ENCODE measurements at regions of chr5 and their contacts with region 1.

Region 1: DNA sequence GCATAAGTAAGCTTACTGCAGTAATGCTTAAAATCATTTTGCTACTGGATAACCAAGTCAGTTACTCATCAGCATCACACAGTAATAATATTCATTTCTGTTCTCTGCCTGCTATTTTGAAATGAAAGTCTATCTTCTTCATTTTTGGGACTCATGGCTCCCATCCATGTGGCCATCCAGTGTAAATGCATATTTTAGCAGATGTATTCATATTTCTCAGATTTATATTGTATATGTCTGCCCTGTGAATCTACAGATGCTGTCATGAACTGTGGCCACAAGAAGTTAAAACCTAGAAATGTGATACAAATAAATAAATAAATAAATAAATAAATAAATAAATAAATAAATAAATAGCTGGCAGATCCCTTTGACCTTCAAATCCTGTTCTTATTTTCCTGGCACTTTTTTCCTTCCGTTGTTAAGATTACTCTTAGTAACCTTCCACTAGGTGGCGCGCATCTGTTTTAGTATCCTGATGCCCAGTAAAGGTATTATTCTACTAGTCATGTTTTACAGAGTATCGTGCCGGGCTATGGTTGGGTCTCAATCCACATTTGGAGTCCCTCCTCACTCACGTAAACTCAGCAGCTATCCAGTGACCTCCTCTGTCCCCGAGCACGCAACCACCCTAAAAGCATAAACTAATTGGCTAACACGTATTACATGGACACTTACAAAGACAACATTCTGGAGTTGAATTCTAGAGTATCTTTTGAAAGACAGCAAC is 79.2 kb upstream of the IL7R start:
- DNase-seq: peak; percentile 53 to 83 (median 68)
- ATAC-seq: peak; percentile 54 to 60
- H3K4me3 Mint-ChIP-seq: peak overlapping the region; percentile 20 to 84 (median 72)
- H3K27ac Mint-ChIP-seq: peak overlapping the region; percentile 75 to 97 (median 92)
- H3K4me1 Mint-ChIP-seq: peaks cover 34 to 70% (median 61%) of the 10 kb centered on the region in 4 donors
- H3K27me3 Mint-ChIP-seq: no peaks in the 10 kb centered on the region

Region 2: GRCh38 chr5:35735718-35736117 is 41.8 kb before region 1 on chr5:
- POLR2A ChIA-PET with region 1: no interaction called
- DNase-seq: no peak
- ATAC-seq: no peak
- H3K4me3 Mint-ChIP-seq: no peak overlapping the region
- H3K27ac Mint-ChIP-seq: no peak overlapping the region
- H3K4me1 Mint-ChIP-seq: peaks cover 0 to 19% (median 7%) of the 10 kb centered on the region in 4 donors
- H3K27me3 Mint-ChIP-seq: no peaks in the 10 kb centered on the region

Region 3: DNA sequence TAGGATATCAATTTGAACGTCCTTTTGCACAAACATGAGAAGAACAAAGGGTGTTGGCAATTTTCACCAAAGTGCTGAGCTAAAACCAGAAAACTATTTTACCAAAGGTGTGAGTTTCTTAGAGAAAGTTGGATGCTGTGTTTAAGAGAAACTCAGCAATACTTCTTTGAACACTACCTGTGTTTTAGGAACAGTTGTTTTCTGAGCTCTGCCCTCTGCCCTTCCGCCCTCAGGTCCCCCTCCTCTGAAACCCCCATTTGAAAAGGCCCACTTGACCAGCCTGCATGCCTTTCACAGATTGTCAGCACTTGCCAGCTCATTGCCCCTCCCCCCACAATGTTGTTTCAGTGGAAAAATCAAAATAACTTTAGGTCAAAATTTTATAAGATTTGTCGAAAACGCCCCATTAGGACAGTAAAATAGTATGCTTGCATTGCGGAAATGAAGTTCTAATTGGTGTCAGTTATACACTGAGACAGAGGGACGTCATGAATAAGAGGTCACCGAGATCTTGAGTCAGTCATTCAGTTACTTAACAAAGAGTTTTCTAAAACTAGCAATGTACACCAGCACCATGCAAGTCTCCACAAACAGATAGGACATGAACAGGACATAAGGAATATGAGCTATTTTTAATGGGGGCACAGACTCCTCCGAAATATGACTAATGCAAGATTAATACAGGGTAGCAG is 17.3 kb after region 1 on chr5:
- POLR2A ChIA-PET with region 1: interaction called, 18 read pairs
- DNase-seq: no peak
- ATAC-seq: no peak
- H3K4me3 Mint-ChIP-seq: peak overlapping the region in 3 of 10 donors; percentile 9 to 20 (median 11)
- H3K27ac Mint-ChIP-seq: peak overlapping the region in 9 of 10 donors; percentile 18 to 99 (median 77)
- H3K4me1 Mint-ChIP-seq: peaks cover 38 to 75% (median 71%) of the 10 kb centered on the region in 4 donors
- H3K27me3 Mint-ChIP-seq: no peaks in the 10 kb centered on the region

Region 4: DNA sequence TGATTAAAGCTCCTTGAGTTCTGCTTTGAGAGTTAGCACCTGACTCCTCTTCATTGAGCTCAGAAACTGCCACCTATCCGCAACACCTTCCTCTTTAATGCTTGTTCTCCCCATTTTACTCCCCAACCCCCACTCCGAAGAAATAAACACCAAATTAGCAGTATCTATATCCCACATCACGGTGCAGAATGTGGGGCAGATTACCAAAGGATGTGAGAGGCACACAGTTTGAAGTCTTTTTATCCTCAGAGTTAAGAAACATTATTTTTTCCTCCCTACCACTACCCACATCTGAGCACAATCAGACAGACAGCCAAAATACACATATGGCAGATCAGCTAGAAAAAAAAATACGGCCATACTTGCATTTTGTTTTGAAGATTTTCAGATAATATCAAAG is 53.1 kb after region 1 on chr5:
- POLR2A ChIA-PET with region 1: interaction called, 11 read pairs
- DNase-seq: peak in 8 of 10 donors; percentile 52 to 91 (median 70)
- ATAC-seq: peak; percentile 88 to 95
- H3K4me3 Mint-ChIP-seq: peak overlapping the region; percentile 37 to 83 (median 63)
- H3K27ac Mint-ChIP-seq: peak overlapping the region in 9 of 10 donors; percentile 23 to 95 (median 92)
- H3K4me1 Mint-ChIP-seq: peaks cover 41 to 94% (median 89%) of the 10 kb centered on the region in 4 donors
- H3K27me3 Mint-ChIP-seq: no peaks in the 10 kb centered on the region

Region 5: DNA sequence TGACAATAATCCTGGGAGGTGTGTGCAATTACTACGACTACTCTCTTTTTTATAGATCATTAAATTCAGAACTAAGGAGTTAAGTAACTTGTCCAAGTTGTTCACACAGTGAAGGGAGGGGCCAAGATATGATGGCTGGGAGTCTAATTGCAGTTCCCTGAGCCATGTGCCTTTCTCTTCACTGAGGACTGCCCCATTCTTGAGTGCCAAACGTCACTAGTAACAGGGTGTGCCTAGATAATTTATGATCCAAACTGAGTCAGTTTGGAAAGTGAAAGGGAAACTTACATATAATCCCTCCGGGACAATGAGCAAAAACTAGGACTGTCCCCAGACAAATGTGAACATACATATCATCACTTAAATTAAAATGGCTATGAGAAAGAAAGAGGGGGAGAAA is 99.4 kb after region 1 on chr5:
- POLR2A ChIA-PET with region 1: interaction called, 72 read pairs
- DNase-seq: no peak
- ATAC-seq: no peak
- H3K4me3 Mint-ChIP-seq: peak overlapping the region in 8 of 10 donors; percentile 15 to 78 (median 42)
- H3K27ac Mint-ChIP-seq: peak overlapping the region; percentile 82 to 97 (median 86)
- H3K4me1 Mint-ChIP-seq: peaks cover 44 to 92% (median 88%) of the 10 kb centered on the region in 4 donors
- H3K27me3 Mint-ChIP-seq: no peaks in the 10 kb centered on the region

Region 6: DNA sequence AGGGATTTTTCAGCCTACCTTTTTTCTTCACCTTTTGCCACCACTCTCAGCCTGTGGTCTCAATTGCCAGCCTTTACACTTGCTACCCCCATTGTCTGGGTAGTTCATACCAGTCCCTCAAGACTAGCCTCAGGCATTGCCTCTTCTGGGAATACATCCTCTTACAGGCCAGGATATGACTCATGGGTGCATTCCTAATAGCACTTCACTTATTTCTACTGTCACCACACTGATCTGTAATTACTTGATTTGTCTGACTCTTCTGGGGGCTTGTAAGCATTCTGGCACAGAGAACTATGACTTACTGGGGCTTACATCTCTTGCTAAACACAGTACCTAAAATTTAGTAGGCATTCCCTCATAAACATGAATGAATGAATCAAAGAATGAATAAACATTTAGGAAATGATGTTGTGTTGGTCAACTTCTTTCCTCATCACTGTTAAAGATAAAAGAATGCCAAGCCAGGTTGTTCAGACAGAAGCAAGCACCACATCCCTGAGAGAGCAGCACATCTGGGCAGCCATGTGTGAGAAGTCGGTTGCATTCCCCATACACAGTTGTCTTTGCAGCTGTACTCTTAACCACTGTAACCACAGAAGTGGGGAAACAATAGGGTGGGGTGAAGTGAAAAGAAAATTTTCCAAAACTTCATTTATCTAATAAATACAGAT is 106.7 kb after region 1 on chr5:
- POLR2A ChIA-PET with region 1: interaction called, 66 read pairs
- DNase-seq: no peak
- ATAC-seq: peak; percentile 43 to 54
- H3K4me3 Mint-ChIP-seq: peak overlapping the region in 7 of 10 donors; percentile 5 to 51 (median 21)
- H3K27ac Mint-ChIP-seq: peak overlapping the region; percentile 9 to 85 (median 58)
- H3K4me1 Mint-ChIP-seq: peaks cover 30 to 55% (median 53%) of the 10 kb centered on the region in 4 donors
- H3K27me3 Mint-ChIP-seq: no peaks in the 10 kb centered on the region

Region 7: DNA sequence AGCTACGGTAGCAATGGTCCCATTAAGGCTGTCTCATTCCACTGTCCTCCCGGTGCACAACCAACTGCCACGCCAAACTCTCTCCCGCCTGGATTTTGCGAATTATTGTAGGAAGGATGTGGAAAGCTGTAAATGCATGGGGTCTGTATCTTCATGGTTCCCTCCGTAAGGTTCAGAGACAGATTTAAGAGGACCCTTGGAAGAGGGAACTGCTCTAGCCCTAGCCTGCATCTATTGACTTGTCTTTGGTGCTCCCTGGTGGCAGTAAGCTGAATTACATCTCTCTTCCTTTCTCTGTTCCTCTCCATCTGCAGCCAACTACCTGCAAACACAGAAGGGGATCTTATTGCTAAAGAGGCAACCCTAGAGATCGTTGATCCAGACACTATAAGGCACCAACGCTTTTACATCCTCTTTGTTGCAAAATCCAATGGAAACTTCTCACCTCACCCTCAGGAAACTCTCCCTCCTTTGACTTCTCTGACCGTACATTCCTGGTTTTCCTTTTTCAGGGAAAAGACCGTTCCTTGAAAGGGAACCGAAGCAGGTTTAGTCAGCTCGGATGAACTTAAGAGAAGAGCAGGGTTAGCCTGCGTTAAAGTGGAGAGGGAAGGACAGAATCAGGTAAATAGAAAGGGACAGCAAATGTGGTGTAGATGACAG is 149.0 kb after region 1 on chr5:
- POLR2A ChIA-PET with region 1: interaction called, 12 read pairs
- DNase-seq: peak; percentile 17 to 83 (median 68)
- ATAC-seq: peak; percentile 45 to 52
- H3K4me3 Mint-ChIP-seq: peak overlapping the region in 9 of 10 donors; percentile 14 to 87 (median 77)
- H3K27ac Mint-ChIP-seq: peak overlapping the region in 6 of 10 donors; percentile 12 to 93 (median 74)
- H3K4me1 Mint-ChIP-seq: peaks cover 25 to 38% (median 34%) of the 10 kb centered on the region in 4 donors
- H3K27me3 Mint-ChIP-seq: peaks cover 0 to 8% (median 1%) of the 10 kb centered on the region in 5 donors